ENCODE measurements at regions of chr15 and their contacts with region 1.

Region 1: GRCh38 chr15:29792426-29793159 is 29.7 kb downstream of the TJP1 start:
- DNase-seq: no peak
- ATAC-seq: no peak
- H3K4me3 ChIP-seq: no peak overlapping the region
- H3K27ac ChIP-seq: no peak overlapping the region
- H3K4me1 ChIP-seq: no peaks in the 10 kb centered on the region
- H3K27me3 ChIP-seq: no peaks in the 10 kb centered on the region
- CTCF ChIP-seq: no peak

Region 2: GRCh38 chr15:29736744-29737020 is 55.9 kb before region 1 on chr15:
- CTCF ChIA-PET with region 1: no interaction called
- POLR2A ChIA-PET with region 1: no interaction called
- in situ Hi-C with region 1: no loop called
- intact Hi-C with region 1: loop called (anchors 5 kb)
- DNase-seq: no peak
- ATAC-seq: peak; percentile 58; the same call in 1 of the 2 replicates
- H3K4me3 ChIP-seq: no peak overlapping the region
- H3K27ac ChIP-seq: no peak overlapping the region
- H3K4me1 ChIP-seq: no peaks in the 10 kb centered on the region
- H3K27me3 ChIP-seq: no peaks in the 10 kb centered on the region
- CTCF ChIP-seq: no peak

Region 3: GRCh38 chr15:29870495-29871151 is 78.0 kb after region 1 on chr15:
- CTCF ChIA-PET with region 1: no interaction called
- POLR2A ChIA-PET with region 1: no interaction called
- in situ Hi-C with region 1: no loop called
- intact Hi-C with region 1: loop called (anchors 10 kb)
- DNase-seq: no peak
- ATAC-seq: no peak
- H3K4me3 ChIP-seq: no peak overlapping the region
- H3K27ac ChIP-seq: no peak overlapping the region
- H3K4me1 ChIP-seq: no peaks in the 10 kb centered on the region
- H3K27me3 ChIP-seq: no peaks in the 10 kb centered on the region
- CTCF ChIP-seq: no peak